ENCODE measurements at regions of chr12 and their contacts with region 1.

Region 1: DNA sequence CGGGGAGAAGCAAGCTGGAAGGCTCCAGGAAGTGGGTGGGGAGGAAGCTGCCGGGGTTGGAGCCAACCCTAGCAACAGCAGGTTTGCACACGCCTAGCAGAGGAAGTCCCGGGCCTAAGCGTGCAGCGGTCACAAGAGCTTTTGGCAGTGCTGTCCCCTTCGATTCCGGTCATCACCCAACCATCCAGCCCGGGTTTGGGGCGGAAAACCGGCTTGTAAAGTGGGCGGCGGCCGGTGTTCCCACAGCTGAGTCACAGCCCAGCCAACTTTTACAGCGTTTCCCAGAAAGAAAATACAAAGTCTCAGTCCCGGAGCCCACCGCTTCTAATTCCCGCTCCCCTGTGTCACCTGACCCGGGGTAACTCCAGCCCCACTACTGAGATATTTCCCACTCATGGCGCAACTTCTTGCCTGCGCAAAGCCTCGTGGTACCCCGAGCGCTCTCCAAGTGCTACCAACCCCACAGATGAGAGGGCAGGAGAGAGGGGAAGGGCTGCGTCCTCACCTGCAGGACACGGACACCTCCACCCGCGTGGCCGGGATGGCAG is 385 bp downstream of the CPNE8 start:
- DNase-seq: peak; percentile 90 to 98
- H3K4me3 ChIP-seq: peak overlapping the region; percentile 59
- CTCF ChIP-seq: no peak
- POLR2A ChIP-seq: no peak

Region 2: DNA sequence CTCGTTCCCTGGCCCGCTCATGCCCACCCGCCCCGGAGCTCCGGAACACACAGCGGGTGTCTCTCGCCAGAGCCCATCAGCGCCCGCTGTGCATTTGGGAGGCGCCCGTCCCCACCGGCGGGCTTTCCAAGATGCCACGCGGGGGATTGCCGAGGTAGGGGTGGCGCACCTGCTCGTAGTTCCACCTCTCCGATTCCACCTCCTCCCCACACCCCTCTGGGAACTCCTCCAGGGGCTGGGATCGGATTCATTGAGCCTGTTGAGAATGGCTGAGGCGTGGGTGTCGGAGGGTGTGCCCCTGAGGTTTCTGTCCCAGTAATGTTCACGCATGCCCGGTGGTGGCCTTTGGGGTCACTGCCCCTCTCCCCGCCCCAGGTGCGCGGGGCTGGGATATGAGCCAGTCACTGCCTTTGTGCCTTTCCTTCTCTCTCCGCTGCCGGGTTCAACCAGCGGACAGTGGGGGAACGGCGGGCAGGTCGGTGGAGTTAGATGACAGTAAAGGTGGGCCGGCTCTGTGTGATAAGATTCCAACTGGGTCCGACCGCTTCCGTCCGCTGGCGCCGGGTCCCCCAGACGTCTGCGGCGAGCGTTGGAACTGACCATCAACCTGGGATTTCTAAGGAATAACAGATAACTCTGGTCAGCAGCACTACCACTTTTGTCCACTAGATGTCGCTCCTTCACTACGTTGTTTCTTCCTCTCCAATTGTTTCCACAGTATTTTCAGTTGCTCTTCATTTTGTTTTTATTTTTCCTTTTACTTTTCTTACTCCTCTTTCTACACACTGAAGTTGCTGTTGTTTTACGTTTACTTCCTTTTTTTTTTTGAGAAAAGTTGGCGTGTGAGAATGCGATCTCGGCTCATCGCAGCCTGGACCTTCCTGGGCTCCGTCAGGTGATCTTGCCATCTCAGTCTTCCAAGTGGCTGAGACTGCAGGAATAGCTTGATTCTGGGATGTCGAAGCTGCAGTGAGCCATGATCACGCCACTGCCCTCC is 766.5 kb before region 1 on chr12:
- intact Hi-C with region 1: loop called (anchors 5 kb)
- DNase-seq: peak; percentile 69 to 92
- H3K4me3 ChIP-seq: peak overlapping the region; percentile 13
- CTCF ChIP-seq: peak in 1 of 3 donors; percentile 88
- POLR2A ChIP-seq: no peak

Measured in lower leg skin (tissue), 4 donors.